Breast epithelium (tissue), 4 donors: ENCODE measurements at regions of chr17 and their contacts with region 1.

Region 1: DNA sequence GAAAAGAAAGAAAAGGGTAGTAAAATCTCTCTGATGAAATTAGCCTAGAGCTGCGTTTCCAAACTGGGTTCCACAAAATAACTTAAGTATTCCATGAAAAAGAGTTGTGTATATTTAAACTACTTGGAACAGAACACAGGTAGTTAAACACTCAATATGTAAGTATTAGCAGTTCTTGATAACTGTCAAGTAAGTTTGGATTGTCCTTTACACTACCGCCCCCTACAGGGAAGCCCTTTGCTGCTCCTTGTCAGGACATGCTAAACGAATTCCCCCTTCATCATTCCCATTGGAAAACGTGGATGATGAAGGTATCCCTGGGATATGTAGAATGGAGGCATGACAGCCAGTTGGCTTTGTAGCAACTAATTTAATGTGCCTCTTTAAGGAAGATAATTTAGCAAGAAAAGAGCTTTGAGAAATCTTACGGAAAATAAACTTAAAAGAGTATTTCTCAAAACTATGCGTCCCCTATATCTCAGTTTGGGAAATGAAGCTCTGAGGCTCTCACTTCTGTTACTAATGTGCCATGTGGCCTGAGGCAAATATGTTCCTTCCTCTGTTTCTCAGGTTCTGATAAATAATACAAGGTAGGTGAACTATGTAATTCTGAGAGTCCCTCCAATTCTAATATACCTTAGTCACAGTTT is 18.8 kb downstream of the NCBP3 start:
- DNase-seq: no peak
- H3K4me3 ChIP-seq: no peak overlapping the region
- H3K27ac ChIP-seq: no peak overlapping the region
- H3K4me1 ChIP-seq: no peaks in the 10 kb centered on the region
- H3K27me3 ChIP-seq: no peaks in the 10 kb centered on the region
- CTCF ChIP-seq: peak in 1 of 3 donors; percentile 33
- POLR2A ChIP-seq: no peak

Region 2: GRCh38 chr17:2101448-2102257 is 1725.6 kb before region 1 on chr17:
- intact Hi-C with region 1: loop called (anchors 5 kb)
- DNase-seq: peak; percentile 81 to 87
- H3K4me3 ChIP-seq: no peak overlapping the region
- H3K27ac ChIP-seq: peak overlapping the region; percentile 50 to 60
- H3K4me1 ChIP-seq: peaks cover 0 to 4% of the 10 kb centered on the region in 2 donors
- H3K27me3 ChIP-seq: no peaks in the 10 kb centered on the region
- CTCF ChIP-seq: no peak
- POLR2A ChIP-seq: no peak

Region 3: DNA sequence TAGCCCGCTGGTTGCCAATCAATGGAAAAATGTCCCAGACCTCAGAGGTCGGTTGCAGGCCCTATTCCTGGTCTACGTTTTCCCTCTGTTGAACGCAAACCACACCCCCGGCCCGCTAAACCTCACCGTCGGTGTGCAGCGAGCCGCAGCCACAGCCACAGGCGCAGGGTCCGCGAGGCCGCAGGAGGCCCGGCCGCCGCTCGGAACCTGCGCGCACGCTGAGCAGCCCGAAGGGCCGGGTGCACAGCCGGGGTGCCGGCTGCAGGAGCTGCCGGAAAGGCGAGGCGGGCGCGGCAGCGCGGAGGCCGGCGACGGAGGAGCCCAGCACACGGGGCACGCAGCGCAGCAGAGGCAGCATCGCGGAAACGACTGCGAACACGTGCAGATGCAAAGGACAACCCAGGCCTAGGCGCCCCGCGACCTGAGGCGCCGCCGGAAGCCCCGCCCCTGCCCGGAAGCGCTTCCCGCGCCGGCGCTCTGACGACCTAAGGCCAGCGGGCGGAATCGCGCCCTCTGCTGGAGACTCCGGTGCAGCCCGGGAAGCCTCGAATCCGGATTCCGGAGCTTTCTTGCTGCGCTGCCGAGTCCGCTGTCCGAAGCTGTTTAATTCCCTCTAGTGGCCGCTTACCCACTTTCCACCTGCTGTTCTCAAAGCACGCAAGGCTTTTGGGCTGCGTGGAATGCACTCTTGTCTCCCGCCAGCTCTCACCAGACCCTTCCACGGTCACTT is 1611.6 kb after region 1 on chr17 and contains the start of gene C1QBP:
- intact Hi-C with region 1: loop called (anchors 10 kb)
- DNase-seq: peak; percentile 83 to 93
- H3K4me3 ChIP-seq: peak within 1 kb of the TSS; percentile 64 to 85 (median 80)
- H3K27ac ChIP-seq: peak within 1 kb of the TSS; percentile 79 to 83
- H3K4me1 ChIP-seq: peaks cover 0 to 10% of the 10 kb centered on the region in 2 donors
- H3K27me3 ChIP-seq: no peaks in the 10 kb centered on the region
- CTCF ChIP-seq: peak; percentile 95 to 99 (median 99)
- POLR2A ChIP-seq: no peak
- total RNA-seq, gene C1QBP: 59.0 to 109 (median 88.8) TPM

Region 4: DNA sequence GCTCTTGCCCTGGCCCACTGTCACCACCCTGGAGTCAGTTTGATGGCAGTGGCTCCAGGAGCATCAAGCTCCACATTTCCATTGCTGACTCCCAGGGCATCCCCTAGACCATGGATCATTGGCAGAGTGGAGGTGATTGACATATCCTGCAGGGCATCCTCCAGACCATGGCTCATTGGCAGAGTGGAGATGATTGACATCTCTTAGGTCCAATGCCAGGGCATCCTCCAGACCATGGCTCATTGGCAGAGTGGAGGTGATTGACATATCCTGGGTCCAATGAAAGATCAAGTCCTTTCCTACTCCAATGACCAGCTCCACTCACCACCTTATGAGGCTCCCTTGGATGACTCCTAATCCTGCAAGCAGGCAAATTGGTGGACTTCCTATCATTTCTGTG is 1931.4 kb after region 1 on chr17:
- intact Hi-C with region 1: no loop called
- DNase-seq: no peak
- H3K4me3 ChIP-seq: no peak overlapping the region
- H3K27ac ChIP-seq: no peak overlapping the region
- H3K4me1 ChIP-seq: no peaks in the 10 kb centered on the region
- H3K27me3 ChIP-seq: peaks cover 0 to 21% of the 10 kb centered on the region in 2 donors
- CTCF ChIP-seq: no peak
- POLR2A ChIP-seq: no peak